GM10248 (cell line): ENCODE measurements at regions of chr19 and their contacts with region 1.

Region 1: DNA sequence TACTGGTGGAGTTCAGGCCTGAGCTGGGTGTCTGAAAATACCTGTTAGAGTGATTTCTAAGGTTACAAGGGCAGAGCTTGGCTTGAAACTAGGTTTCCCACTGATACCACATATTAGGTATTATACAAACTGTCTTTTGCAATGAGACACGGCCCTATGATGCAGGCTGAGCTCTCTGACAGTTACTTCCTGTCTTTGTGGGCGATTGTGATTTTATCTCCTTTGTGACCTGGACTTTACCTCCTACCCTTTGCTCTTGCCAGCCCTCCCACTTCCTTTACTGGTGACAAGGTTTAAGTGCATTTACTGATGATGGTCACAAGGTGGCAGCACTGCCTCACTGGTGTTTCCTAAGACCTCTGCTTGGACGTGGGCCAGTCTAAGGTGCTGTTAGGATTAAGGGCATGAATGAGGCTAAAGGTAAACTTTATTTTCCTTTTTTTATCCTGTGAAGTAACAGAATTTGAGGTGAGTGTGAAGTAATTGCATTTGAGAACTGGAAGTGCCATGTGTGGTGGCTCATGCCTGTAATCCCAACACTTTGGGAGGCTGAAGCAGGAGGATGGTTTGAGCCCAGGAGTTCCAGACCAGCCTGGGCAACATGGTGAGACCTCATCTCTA is 7.7 kb upstream of the CXCL17 start:
- DNase-seq: peak; percentile 86
- CTCF ChIP-seq: peak; percentile 84

Region 2: DNA sequence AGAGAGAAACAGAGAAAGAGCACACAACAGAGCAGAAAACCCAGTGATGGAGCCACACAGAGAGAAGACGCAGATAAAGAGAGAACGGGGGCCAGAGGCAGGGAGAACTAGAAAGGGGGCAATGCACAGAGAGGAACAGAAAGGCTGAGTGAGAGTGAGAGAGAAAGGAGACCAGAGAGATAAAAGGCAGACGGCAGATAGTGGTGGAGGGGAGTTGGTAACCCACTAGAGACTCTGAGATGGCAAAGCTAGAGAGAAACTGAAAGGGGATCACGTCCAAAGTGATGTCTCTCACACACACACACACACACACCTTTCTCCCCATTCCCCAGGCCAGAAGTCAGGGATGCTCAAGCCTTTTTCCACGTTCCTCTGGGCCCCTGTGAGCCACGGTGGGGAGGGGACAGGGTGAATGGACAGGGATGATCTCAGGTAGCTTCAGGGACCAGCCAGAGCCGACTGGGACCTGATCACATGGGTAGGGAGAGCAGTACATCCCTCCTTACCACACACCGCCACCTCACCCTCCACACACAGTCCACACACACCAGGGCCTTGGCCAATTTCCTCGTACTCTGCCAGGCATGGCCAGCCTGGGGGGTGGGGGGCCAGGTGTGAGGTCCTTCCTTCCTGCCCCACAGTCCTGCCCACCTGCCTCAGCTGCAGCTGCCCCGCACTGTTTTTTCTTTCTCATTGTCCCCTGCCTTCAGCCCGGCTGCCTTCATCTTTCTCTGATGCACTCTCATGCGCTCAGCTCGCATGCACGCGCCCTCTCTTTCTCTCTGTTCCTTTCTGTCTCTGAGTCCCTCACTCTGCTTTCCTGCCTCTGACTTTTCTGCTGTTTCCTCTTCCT is 295.7 kb before region 1 on chr19:
- CTCF ChIA-PET with region 1: no interaction called
- POLR2A ChIA-PET with region 1: no interaction called
- DNase-seq: peak; percentile 54
- CTCF ChIP-seq: no peak

Region 3: DNA sequence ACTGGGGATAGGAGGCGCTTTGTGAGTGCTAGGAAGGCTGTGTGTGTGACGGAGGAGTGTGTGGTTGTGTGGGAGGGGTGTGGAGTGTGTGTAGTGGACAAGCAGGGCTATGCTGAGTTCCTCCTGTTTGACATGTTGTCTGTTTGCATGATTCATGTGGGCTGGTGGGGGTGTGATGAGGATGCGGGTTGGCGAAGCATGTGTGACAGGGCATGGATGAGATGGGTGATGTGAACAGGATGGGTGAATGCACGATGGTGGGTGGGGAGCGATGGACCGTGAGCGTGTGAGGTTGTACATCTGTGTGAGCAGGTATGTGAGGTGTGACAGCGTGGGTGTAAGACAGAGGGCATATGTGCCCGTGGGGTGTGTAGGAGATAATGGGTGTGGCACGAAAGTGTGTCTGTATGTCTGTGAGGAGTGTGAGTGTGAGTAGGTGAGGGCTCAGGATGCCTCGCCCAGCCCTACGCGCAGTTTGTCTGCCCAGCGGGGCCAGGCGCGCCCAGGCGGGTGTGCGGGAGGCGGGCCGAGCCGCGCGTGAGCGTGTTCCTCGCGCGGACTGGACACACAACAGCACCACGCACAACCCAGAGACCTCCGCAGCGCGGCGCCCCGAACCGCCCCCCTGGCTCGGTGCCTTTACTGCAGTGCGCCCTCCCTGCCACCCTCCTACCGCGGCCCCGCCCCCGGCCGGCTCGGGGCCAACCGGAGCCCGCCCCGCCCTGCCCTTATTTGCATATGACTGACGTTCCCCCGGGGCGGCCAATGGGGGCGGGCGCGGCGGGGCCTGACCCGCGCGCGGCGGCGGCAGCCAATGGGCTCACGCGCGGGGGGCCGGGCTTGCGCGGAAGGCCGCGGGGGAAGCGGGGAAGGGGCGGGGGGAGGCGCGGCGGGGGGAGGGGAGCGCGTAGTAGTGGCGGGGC is 167.0 kb before region 1 on chr19:
- CTCF ChIA-PET with region 1: no interaction called
- POLR2A ChIA-PET with region 1: no interaction called
- DNase-seq: peak; percentile 95
- CTCF ChIP-seq: no peak

Region 4: DNA sequence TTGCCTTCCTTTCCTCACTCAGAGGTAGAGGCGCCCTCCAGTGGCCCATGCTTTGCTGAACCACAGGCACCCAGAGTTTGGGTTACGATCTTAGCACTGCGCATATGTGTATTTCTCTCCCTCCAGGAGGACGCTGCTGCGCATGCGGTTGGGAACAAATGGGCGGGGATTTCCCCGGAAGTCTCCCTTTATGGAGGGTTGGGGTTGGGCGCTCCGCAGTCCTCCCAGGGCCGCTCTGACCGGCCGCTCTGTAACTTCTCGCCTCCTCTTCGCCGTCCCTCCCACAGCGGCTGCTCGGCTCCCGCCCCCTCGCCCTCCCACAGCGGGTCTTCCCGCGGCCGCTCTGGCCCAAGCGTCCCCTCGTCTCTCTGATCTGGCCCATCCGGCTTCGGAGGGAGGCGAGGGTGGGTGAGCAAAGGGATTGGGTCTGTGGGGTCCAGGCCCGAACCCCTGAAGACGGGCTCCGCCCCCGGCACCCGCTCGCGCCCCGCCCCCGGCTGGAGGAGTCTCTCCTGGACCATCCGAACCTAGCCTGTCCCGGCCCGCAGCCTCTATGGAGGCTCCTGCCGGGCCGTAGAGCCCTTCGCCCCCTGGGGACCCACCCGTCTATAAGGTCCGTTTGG is 125.0 kb before region 1 on chr19 and contains the start of gene MEGF8:
- CTCF ChIA-PET with region 1: no interaction called
- POLR2A ChIA-PET with region 1: no interaction called
- DNase-seq: peak; percentile 98
- CTCF ChIP-seq: peak; percentile 92

Region 5: DNA sequence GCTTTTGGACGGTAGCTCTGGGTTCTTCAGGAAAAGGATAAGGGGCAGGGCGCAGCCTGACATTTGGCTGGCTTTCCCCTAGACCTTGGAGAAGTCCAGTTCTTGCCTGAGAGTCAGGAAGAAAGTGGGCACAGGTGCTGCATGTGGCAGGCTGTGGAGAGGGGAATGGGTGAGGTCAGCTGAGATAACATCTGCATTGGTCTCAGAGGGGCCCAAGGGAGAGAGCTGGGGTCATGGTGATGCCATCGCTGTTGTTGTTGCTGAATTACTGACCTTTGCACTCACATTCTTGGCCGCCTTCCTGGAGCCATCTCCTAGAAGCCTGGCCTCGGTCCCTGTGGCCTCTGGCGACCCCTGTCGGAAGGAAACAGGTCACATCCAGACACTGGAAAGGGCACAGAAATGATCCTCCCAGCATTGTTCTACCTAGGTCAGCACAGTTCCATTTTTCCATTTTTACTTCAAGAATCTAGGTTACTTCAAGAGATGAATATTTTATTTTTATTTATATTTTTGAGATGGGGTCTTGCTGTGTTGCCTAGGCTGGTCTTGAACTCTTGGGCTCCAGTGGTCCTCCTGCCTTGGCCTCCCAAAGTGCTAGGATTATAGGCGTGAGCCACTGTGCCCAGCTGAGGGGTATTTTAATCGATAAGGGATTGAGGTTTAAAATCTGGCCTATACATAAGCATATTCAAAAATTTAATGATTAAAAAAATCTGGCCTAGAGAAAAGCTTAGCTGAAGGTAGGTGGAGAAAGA is 16.7 kb before region 1 on chr19:
- CTCF ChIA-PET with region 1: interaction called, 84 read pairs
- POLR2A ChIA-PET with region 1: no interaction called
- DNase-seq: peak; percentile 66
- CTCF ChIP-seq: peak; percentile 85

Region 6: DNA sequence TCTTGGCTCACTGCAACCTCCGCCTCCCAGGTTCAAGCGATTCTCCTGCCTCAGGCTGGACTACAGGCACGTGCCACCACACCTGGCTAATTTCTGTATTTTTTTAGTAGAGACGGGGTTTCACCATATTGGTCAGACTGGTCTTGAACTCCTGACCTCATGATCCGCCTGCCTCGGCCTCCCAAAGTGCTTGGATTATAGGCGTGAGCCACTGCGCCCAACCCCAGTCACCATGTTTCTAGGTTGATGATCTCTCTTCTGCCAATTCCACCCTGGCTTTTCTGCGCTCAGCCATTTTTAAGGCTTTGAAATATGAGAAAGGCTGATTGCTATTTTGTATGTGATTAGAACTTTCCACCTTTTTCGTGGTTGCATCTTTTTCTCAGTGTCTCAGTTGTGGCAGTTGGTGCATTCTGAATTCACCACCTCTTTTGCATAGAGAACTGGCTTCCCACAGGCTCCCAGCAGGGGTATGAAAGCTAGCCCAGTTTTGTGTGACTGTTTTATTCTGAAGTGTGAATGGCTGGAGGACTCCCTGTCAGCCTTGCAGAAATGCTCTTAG is 62.4 kb after region 1 on chr19:
- CTCF ChIA-PET with region 1: interaction called, 31 read pairs
- POLR2A ChIA-PET with region 1: interaction called, 4 read pairs
- DNase-seq: peak; percentile 70
- CTCF ChIP-seq: no peak

Region 7: GRCh38 chr19:42540071-42540553 is 89.7 kb after region 1 on chr19:
- CTCF ChIA-PET with region 1: interaction called, 15 read pairs
- POLR2A ChIA-PET with region 1: no interaction called
- DNase-seq: no peak
- CTCF ChIP-seq: no peak

Region 8: GRCh38 chr19:42563352-42564210 is 113.2 kb after region 1 on chr19:
- CTCF ChIA-PET with region 1: interaction called, 10 read pairs
- POLR2A ChIA-PET with region 1: no interaction called
- DNase-seq: peak; percentile 68
- CTCF ChIP-seq: peak; percentile 67

Region 9: GRCh38 chr19:42589792-42590191 is 139.4 kb after region 1 on chr19:
- CTCF ChIA-PET with region 1: no interaction called
- POLR2A ChIA-PET with region 1: no interaction called
- DNase-seq: no peak
- CTCF ChIP-seq: no peak